Activated T-helper 2 cell treated with anti-CD3 and anti-CD28 coated beads, Interferon-gamma antibody, Interleukin-2, Interleukin-4, amounts not matched to agents 10 μg/mL and 5 μg/mL and 100 μg/mL, durations not matched to agents 14 hours and 24 hours and 36 hours (primary cell): ENCODE measurements at regions of chr17 and their contacts with region 1.

Region 1: GRCh38 chr17:41340934-41341861 is 9.4 kb downstream of the KRT33A start:
- DNase-seq: peak; percentile 49
- H3K4me3 Mint-ChIP-seq: no peak overlapping the region
- H3K27ac Mint-ChIP-seq: peak overlapping the region; percentile 24
- H3K4me1 Mint-ChIP-seq: peaks cover 29% of the 10 kb centered on the region
- H3K27me3 Mint-ChIP-seq: peaks cover 34% of the 10 kb centered on the region

Region 2: GRCh38 chr17:41403798-41404671 is 62.8 kb after region 1 on chr17:
- intact Hi-C with region 1: loop called (anchors 5 kb)
- DNase-seq: no peak
- H3K4me3 Mint-ChIP-seq: no peak overlapping the region
- H3K27ac Mint-ChIP-seq: peak overlapping the region; percentile 82
- H3K4me1 Mint-ChIP-seq: peaks cover 24% of the 10 kb centered on the region
- H3K27me3 Mint-ChIP-seq: no peaks in the 10 kb centered on the region